HCT116 (cell line): ENCODE measurements at regions of chr3 and their contacts with region 1.

Region 1: DNA sequence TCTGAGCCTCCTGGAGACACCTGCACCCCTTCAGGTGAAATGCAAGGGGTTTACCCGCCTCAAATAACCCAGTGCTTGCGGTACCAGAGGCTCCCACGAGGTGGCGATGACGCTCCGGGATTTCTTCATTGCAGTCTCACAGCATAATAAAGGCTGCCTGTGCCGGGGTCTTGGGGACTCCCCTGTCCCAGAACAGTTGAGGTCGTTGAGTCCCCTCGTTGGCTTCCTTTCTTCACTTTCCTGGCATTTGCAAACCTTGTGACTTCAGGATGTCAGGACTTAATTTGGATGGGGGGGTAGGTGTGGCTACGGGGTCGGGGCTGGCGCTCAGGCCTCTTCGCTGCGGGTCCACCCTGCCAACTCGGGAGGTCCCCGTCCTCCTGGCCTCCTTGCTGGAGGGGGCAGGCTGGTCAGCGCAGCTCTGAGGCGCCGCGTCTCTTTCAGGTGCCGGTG is 1.3 kb downstream of the GNAT1 start:
- DNase-seq: peak; percentile 43
- ATAC-seq: peak; percentile 50
- H3K4me3 ChIP-seq: no peak overlapping the region
- H3K27ac ChIP-seq: no peak overlapping the region
- H3K4me1 ChIP-seq: peaks cover 8 to 26% of the 10 kb centered on the region in 2 experiments; a peak in 3 of 4 replicates
- H3K27me3 ChIP-seq: no peaks in the 10 kb centered on the region
- CTCF ChIP-seq: peak; percentile 84 to 95 (median 91)
- POLR2A ChIP-seq: no peak
- RAD21 ChIP-seq: peak; percentile 93

Region 2: DNA sequence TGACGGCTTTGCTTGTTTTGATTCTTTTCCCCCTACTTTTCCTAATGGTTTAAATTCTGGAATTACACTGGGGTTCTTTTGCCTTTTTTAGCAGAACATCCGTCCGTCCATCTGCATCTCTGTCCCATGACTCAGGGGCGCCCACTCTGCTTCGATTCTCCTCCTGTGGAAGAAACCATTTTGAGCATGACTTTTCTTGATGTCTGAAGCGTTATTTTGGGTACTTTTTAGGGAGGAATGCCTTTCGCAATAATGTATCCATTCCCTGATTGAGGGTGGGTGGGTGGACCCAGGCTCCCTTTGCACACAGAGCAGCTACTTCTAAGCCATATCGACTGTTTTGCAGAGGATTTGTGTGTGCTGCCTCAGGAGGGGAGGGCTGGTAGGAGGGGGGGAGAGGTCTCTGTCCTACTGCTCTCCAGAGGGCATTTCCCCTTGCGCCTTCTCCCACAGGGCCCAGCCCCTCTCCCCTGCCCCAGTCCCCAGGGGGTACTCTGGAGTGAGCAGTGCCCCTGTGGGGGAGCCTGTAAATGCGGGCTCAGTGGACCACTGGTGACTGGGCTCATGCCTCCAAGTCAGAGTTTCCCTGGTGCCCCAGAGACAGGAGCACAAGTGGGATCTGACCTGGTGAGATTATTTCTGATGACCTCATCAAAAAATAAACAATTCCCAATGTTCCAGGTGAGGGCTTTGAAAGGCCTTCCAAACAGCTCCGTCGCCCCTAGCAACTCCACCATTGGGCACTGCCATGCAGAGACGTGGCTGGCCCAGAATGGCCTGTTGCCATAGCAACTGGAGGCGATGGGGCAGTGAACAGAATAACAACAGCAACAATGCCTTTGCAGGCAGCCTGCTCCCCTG is 657.9 kb before region 1 on chr3:
- CTCF ChIA-PET with region 1: no interaction called
- POLR2A ChIA-PET with region 1: no interaction called
- RAD21 ChIA-PET with region 1: no interaction called
- intact Hi-C with region 1: no loop called
- DNase-seq: no peak
- ATAC-seq: no peak
- H3K4me3 ChIP-seq: no peak overlapping the region
- H3K27ac ChIP-seq: no peak overlapping the region
- H3K4me1 ChIP-seq: peaks cover 0 to 13% of the 10 kb centered on the region in 2 experiments; a peak in 1 of 4 replicates
- H3K27me3 ChIP-seq: no peaks in the 10 kb centered on the region
- CTCF ChIP-seq: no peak
- POLR2A ChIP-seq: no peak
- RAD21 ChIP-seq: no peak

Region 3: GRCh38 chr3:50121416-50122032 is 71.2 kb before region 1 on chr3:
- CTCF ChIA-PET with region 1: interaction called, 13 read pairs
- POLR2A ChIA-PET with region 1: no interaction called
- RAD21 ChIA-PET with region 1: interaction called in 1 of 2 experiments, 3 read pairs
- intact Hi-C with region 1: loop called (anchors 1 kb)
- DNase-seq: peak; percentile 56
- ATAC-seq: peak; percentile 94
- H3K4me3 ChIP-seq: no peak overlapping the region
- H3K27ac ChIP-seq: no peak overlapping the region
- H3K4me1 ChIP-seq: no peaks in the 10 kb centered on the region
- H3K27me3 ChIP-seq: no peaks in the 10 kb centered on the region
- CTCF ChIP-seq: peak; percentile 81 to 84 (median 82)
- POLR2A ChIP-seq: no peak
- RAD21 ChIP-seq: peak; percentile 91

Region 4: DNA sequence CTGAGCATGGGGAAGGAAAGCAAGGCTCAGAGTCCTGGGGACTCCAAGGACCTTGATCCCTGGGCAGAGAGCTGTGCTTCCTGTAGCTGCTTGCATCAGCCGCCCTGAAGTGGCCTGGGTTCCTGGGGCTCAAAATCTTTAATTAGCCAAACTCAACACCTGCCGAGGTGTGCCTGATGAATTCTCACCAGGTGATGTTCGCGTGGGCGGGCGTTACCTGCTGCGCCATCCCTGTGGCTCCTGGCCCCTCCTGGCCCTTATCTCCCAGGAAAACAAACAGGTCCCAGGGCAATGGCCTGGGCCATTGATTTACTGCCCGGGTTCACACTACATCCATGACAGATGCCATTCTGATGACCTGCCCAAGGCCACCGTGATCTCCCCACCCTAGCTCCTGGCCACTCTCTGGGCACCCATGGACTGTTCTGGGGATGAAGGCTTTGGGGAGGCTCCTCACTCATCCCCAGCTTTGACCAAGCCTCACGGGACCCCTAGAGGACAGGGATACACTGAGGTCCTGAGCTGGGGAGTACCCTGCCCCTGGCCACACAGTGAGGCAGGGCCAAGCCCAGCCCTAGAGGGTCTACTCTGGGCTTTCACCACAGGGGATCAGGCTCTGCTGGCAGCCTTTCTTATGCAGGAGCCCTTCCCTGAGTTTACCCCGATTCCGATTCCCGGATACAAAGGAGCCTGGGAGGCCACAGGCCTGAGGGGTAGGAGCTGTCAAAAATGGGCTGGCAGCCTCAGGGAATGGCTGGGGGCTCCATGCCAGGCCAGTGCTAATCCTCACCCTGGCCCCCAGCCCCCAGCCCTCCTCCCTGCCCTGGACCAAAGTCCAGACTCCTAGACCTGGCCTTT is 18.0 kb after region 1 on chr3:
- CTCF ChIA-PET with region 1: interaction called, 10 read pairs
- POLR2A ChIA-PET with region 1: interaction called, 3 read pairs
- RAD21 ChIA-PET with region 1: interaction called, 6 to 7 read pairs
- intact Hi-C with region 1: no loop called
- DNase-seq: no peak
- ATAC-seq: no peak
- H3K4me3 ChIP-seq: no peak overlapping the region
- H3K27ac ChIP-seq: no peak overlapping the region; the same call in 1 of the 2 replicates
- H3K4me1 ChIP-seq: peaks cover 3 to 12% of the 10 kb centered on the region in 2 experiments; a peak in 1 of 4 replicates
- H3K27me3 ChIP-seq: no peaks in the 10 kb centered on the region
- CTCF ChIP-seq: no peak
- POLR2A ChIP-seq: no peak
- RAD21 ChIP-seq: no peak

Region 5: GRCh38 chr3:50227390-50228183 is 34.9 kb after region 1 on chr3:
- CTCF ChIA-PET with region 1: interaction called, 164 read pairs
- POLR2A ChIA-PET with region 1: interaction called, 12 read pairs
- RAD21 ChIA-PET with region 1: interaction called, 45 to 48 read pairs
- intact Hi-C with region 1: loop called (anchors 1 kb)
- DNase-seq: peak; percentile 95
- ATAC-seq: peak; percentile 86
- H3K4me3 ChIP-seq: peak overlapping the region; percentile 58 to 87
- H3K27ac ChIP-seq: peak overlapping the region; percentile 87
- H3K4me1 ChIP-seq: peaks cover 10 to 34% of the 10 kb centered on the region in 2 experiments
- H3K27me3 ChIP-seq: no peaks in the 10 kb centered on the region
- CTCF ChIP-seq: peak in 2 of 3 experiments; percentile 70 to 76; a peak in 4 of 6 replicates
- POLR2A ChIP-seq: peak; percentile 62
- RAD21 ChIP-seq: no peak

Region 6: GRCh38 chr3:50260027-50260941 is 67.6 kb after region 1 on chr3:
- CTCF ChIA-PET with region 1: interaction called, 15 read pairs
- POLR2A ChIA-PET with region 1: no interaction called
- RAD21 ChIA-PET with region 1: interaction called in 1 of 2 experiments, 4 read pairs
- intact Hi-C with region 1: loop called (anchors 2 kb)
- DNase-seq: no peak
- ATAC-seq: peak; percentile 77
- H3K4me3 ChIP-seq: peak overlapping the region; percentile 59 to 64
- H3K27ac ChIP-seq: peak overlapping the region; percentile 77
- H3K4me1 ChIP-seq: peaks cover 35 to 60% of the 10 kb centered on the region in 2 experiments
- H3K27me3 ChIP-seq: no peaks in the 10 kb centered on the region
- CTCF ChIP-seq: peak in 2 of 3 experiments; percentile 83 to 98; a peak in 4 of 6 replicates
- POLR2A ChIP-seq: no peak
- RAD21 ChIP-seq: no peak

Region 7: DNA sequence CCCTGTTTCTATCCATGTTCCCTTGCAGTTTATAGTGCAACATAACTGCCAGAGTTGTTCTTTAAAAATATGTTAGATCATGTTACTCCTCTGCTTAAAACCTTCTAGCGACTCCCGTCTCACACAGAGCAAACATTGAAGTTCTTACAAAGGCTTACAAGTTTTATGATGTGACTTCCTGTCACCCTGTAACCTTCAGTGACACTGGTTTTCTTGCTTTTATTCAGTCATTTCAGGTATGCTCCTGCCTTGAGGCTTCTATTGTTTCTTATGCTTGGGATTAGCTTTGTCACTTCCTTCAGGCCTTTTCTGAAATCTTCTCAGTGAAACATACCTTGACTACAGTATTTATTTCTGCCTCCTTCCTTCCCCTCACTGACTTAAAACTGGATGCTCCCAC is 734.2 kb after region 1 on chr3:
- CTCF ChIA-PET with region 1: no interaction called
- POLR2A ChIA-PET with region 1: no interaction called
- RAD21 ChIA-PET with region 1: no interaction called
- intact Hi-C with region 1: no loop called
- DNase-seq: no peak
- ATAC-seq: no peak
- H3K4me3 ChIP-seq: no peak overlapping the region
- H3K27ac ChIP-seq: no peak overlapping the region
- H3K4me1 ChIP-seq: no peaks in the 10 kb centered on the region
- H3K27me3 ChIP-seq: no peaks in the 10 kb centered on the region
- CTCF ChIP-seq: no peak
- POLR2A ChIP-seq: no peak
- RAD21 ChIP-seq: no peak